WTC11 (cell line): ENCODE measurements at regions of chr1 and their contacts with region 1.

Region 1: GRCh38 chr1:7070389-7071029 is 285.3 kb downstream of the CAMTA1 start:
- DNase-seq: peak; percentile 81
- ATAC-seq: peak; percentile 88
- H3K4me3 Mint-ChIP-seq: peak overlapping the region; percentile 70
- H3K27ac Mint-ChIP-seq: no peak overlapping the region
- H3K4me1 Mint-ChIP-seq: peaks cover 9% of the 10 kb centered on the region
- H3K27me3 Mint-ChIP-seq: peaks cover 4% of the 10 kb centered on the region; the same call in 1 of the 2 replicates
- CTCF ChIP-seq: peak; percentile 88

Region 2: GRCh38 chr1:6962996-6963911 is 107.3 kb before region 1 on chr1:
- CTCF ChIA-PET with region 1: interaction called, 17 read pairs
- POLR2A ChIA-PET with region 1: no interaction called
- DNase-seq: peak; percentile 100
- ATAC-seq: peak; percentile 87
- H3K4me3 Mint-ChIP-seq: peak overlapping the region; percentile 72
- H3K27ac Mint-ChIP-seq: 0 out of 2 replicates have a peak overlapping the region, but pooled peaks have one; percentile 76
- H3K4me1 Mint-ChIP-seq: peaks cover 39% of the 10 kb centered on the region
- H3K27me3 Mint-ChIP-seq: peaks cover 3% of the 10 kb centered on the region
- CTCF ChIP-seq: no peak

Region 3: GRCh38 chr1:6979003-6979613 is 91.4 kb before region 1 on chr1:
- CTCF ChIA-PET with region 1: interaction called, 15 read pairs
- POLR2A ChIA-PET with region 1: no interaction called
- DNase-seq: no peak
- ATAC-seq: peak; percentile 72
- H3K4me3 Mint-ChIP-seq: peak overlapping the region; percentile 2; the same call in 1 of the 2 replicates
- H3K27ac Mint-ChIP-seq: peak overlapping the region; percentile 41
- H3K4me1 Mint-ChIP-seq: peaks cover 40% of the 10 kb centered on the region
- H3K27me3 Mint-ChIP-seq: no peaks in the 10 kb centered on the region
- CTCF ChIP-seq: no peak

Region 4: GRCh38 chr1:6998267-6998666 is 72.2 kb before region 1 on chr1:
- CTCF ChIA-PET with region 1: interaction called, 13 read pairs
- POLR2A ChIA-PET with region 1: no interaction called
- DNase-seq: peak; percentile 47
- ATAC-seq: peak; percentile 94
- H3K4me3 Mint-ChIP-seq: no peak overlapping the region
- H3K27ac Mint-ChIP-seq: no peak overlapping the region
- H3K4me1 Mint-ChIP-seq: peaks cover 26% of the 10 kb centered on the region
- H3K27me3 Mint-ChIP-seq: no peaks in the 10 kb centered on the region
- CTCF ChIP-seq: no peak

Region 5: DNA sequence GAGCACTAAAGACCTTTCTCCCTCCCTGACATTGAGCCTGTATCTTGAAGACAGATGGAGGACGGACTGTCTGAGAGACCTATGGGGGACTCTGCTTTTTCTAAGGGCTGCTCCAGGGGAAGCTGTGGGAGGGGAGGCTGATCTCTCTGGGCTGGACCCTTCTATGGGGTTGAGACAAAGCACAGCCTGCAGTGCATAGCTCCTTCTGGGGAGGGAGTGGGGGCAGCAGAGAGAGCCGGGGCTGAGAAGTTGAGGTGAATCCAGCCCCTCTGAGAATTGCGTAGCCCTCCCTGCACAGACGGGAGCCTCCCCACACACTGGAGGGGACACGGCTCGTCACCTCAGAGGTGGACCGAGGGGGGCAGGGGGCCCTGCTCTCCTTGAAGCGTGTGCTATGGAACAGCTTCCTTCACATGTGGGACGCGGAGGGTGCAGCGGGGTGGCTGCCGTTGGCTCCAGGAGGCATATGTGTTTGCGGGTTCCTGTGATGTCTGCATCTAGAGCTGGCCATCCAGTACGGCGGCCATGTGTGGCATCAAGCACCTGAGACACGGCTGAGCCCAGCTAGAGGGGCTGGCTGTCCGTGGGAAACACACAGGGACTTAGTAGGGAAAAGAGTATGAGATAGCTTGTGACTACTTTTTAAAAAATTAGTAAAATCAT is 13.9 kb after region 1 on chr1:
- CTCF ChIA-PET with region 1: interaction called, 37 read pairs
- POLR2A ChIA-PET with region 1: interaction called, 3 read pairs
- DNase-seq: peak; percentile 43
- ATAC-seq: peak; percentile 97
- H3K4me3 Mint-ChIP-seq: no peak overlapping the region
- H3K27ac Mint-ChIP-seq: no peak overlapping the region
- H3K4me1 Mint-ChIP-seq: no peaks in the 10 kb centered on the region
- H3K27me3 Mint-ChIP-seq: no peaks in the 10 kb centered on the region; the same call in 1 of the 2 replicates
- CTCF ChIP-seq: no peak

Region 6: GRCh38 chr1:7110321-7110720 is 39.8 kb after region 1 on chr1:
- CTCF ChIA-PET with region 1: interaction called, 11 read pairs
- POLR2A ChIA-PET with region 1: no interaction called
- DNase-seq: no peak
- ATAC-seq: no peak
- H3K4me3 Mint-ChIP-seq: no peak overlapping the region
- H3K27ac Mint-ChIP-seq: no peak overlapping the region
- H3K4me1 Mint-ChIP-seq: no peaks in the 10 kb centered on the region
- H3K27me3 Mint-ChIP-seq: no peaks in the 10 kb centered on the region
- CTCF ChIP-seq: no peak

Region 7: DNA sequence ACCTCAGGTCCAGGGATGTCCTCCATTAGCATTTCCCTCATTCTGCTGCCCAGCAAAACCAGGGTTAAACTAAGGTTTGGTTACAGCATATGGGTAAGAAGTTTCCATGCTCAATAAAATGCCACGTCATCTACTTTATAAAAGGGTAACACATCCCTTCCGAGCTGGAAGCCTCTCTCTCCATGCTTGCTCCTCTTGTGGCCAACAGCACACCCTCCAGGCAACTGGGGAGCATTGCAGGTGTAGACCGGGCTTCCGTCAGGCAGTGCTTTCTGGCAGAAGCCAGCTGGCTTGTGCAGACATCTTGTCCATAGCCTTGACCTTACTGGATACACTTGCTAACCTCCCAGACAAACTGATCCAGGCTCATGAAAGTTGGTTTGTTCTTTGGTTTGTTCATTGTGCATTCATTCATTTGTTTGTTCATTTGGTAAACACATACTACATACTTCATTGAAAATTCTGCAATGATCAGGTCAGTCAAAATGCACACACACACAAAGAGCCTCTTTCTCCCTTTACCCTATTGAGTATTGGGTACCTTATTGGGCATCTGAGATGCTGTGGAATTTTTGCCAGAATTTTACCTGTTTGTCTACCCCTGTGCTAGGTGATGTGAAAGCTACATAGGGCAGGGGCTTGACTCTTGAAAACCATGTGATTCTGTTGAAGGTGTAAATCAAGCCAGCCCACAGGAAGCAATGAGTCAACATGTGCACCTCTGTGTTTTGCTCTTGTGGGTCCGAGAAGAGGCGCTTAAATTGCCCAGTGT is 137.6 kb after region 1 on chr1:
- CTCF ChIA-PET with region 1: interaction called, 37 read pairs
- POLR2A ChIA-PET with region 1: no interaction called
- DNase-seq: peak; percentile 87
- ATAC-seq: peak; percentile 99
- H3K4me3 Mint-ChIP-seq: no peak overlapping the region
- H3K27ac Mint-ChIP-seq: peak overlapping the region; percentile 61
- H3K4me1 Mint-ChIP-seq: peaks cover 3% of the 10 kb centered on the region
- H3K27me3 Mint-ChIP-seq: no peaks in the 10 kb centered on the region
- CTCF ChIP-seq: peak; percentile 78